ENCODE measurements at regions of chr2 and their contacts with region 1.

Region 1: DNA sequence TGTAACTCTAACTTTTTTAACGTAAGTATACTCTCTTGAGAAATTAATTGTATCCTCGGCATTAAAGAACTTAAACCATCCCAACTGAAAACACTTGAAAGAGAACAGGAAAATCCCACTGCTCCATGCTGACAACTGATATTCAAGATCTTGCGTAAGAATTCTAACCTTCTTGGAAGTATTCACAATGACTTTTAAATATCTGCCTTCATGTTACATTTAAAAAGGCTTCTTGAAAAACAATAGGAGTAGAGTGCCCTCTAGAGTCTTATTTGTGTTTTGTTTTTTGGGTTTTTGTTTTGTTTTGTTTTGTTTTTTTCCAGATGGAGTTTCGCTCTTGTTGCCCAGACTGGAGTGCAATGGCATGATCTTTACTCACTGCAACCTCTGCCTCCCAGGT is 65.4 kb upstream of the DNAJC10 start:
- DNase-seq: no peak
- H3K4me3 Mint-ChIP-seq: no peak overlapping the region
- H3K27ac Mint-ChIP-seq: no peak overlapping the region
- H3K4me1 Mint-ChIP-seq: no peaks in the 10 kb centered on the region
- H3K27me3 Mint-ChIP-seq: no peaks in the 10 kb centered on the region
- CTCF ChIP-seq: no peak

Region 2: GRCh38 chr2:181738074-181738473 is 912.6 kb before region 1 on chr2:
- CTCF ChIA-PET with region 1: no interaction called
- intact Hi-C with region 1: loop called (anchors 5 kb)
- DNase-seq: no peak
- H3K4me3 Mint-ChIP-seq: no peak overlapping the region
- H3K27ac Mint-ChIP-seq: no peak overlapping the region
- H3K4me1 Mint-ChIP-seq: peaks cover 17% of the 10 kb centered on the region
- H3K27me3 Mint-ChIP-seq: no peaks in the 10 kb centered on the region
- CTCF ChIP-seq: peak; percentile 20

Region 3: GRCh38 chr2:182186132-182186735 is 464.5 kb before region 1 on chr2:
- CTCF ChIA-PET with region 1: no interaction called
- intact Hi-C with region 1: loop called (anchors 1 kb)
- DNase-seq: peak; percentile 26
- H3K4me3 Mint-ChIP-seq: no peak overlapping the region
- H3K27ac Mint-ChIP-seq: no peak overlapping the region
- H3K4me1 Mint-ChIP-seq: no peaks in the 10 kb centered on the region
- H3K27me3 Mint-ChIP-seq: no peaks in the 10 kb centered on the region
- CTCF ChIP-seq: peak; percentile 64

Region 4: GRCh38 chr2:182240862-182241371 is 409.8 kb before region 1 on chr2:
- CTCF ChIA-PET with region 1: interaction called, 33 read pairs
- intact Hi-C with region 1: loop called (anchors 1 kb)
- DNase-seq: peak; percentile 70
- H3K4me3 Mint-ChIP-seq: no peak overlapping the region
- H3K27ac Mint-ChIP-seq: no peak overlapping the region
- H3K4me1 Mint-ChIP-seq: peaks cover 13% of the 10 kb centered on the region
- H3K27me3 Mint-ChIP-seq: no peaks in the 10 kb centered on the region
- CTCF ChIP-seq: peak; percentile 29

Region 5: GRCh38 chr2:182754231-182754630 is 103.5 kb after region 1 on chr2:
- CTCF ChIA-PET with region 1: no interaction called
- intact Hi-C with region 1: no loop called
- DNase-seq: no peak
- H3K4me3 Mint-ChIP-seq: no peak overlapping the region
- H3K27ac Mint-ChIP-seq: no peak overlapping the region
- H3K4me1 Mint-ChIP-seq: peaks cover 2% of the 10 kb centered on the region
- H3K27me3 Mint-ChIP-seq: no peaks in the 10 kb centered on the region
- CTCF ChIP-seq: no peak

Measured in Calu3 (cell line).